Heart right ventricle (tissue), 16 donors: ENCODE measurements at regions of chr18 and their contacts with region 1.

Region 1: DNA sequence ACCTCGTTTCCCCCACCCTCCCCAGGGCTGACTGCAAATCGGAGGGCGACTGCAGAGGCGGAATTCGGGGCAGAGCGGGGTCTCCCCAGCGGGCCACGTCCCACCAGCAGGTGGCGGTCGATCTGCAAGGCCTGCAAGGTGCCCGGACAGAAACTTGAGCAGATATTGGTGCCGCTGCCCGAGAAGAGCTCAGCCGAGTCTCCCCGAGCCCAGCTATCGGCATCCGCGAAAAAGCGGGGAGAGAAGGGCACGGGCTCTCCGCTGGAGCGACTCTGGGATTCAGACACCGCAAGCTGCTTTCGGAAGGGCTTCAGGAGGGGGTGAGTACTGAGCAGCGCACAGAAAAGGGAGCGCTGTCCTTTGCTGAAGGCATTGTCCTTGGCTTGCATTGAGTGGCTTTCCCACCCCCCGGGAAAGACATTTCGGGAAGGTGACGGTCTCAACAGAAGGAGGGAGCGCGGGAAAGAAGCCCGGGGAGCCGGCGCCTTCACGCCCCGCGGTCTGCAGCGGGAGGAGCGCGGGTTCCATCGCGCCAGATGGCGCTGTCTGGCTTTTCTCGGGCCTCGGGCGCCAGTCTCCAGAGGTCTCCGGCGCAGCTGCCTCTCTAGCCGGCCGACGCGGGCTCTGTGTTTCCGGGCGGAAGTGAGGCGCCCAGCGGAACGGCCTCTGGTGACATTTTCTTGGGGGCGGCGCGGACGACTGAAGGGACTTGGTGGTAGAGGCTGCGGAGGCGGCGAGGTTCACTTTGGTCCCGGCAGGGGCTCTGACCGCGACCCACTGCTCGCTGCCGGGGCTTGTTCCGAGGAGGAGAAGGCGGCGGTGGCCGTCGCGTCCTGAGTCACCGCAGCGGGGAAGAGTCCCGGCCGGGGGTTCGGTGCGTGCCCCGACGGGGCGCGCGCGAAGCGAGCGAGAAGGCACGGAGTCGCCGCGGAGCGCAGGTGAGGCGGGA is 69.5 kb downstream of the HAUS1 start:
- DNase-seq: peak; percentile 94
- ATAC-seq: peak; percentile 97 to 99 (median 98)
- H3K4me3 ChIP-seq: peak overlapping the region; percentile 73 to 100 (median 90)
- H3K27ac ChIP-seq: peak overlapping the region; percentile 60 to 97 (median 93)
- H3K4me1 ChIP-seq: peaks cover 3 to 39% (median 32%) of the 10 kb centered on the region in 9 donors
- H3K27me3 ChIP-seq: no peaks in the 10 kb centered on the region
- CTCF ChIP-seq: peak; percentile 67 to 87 (median 74)

Region 2: DNA sequence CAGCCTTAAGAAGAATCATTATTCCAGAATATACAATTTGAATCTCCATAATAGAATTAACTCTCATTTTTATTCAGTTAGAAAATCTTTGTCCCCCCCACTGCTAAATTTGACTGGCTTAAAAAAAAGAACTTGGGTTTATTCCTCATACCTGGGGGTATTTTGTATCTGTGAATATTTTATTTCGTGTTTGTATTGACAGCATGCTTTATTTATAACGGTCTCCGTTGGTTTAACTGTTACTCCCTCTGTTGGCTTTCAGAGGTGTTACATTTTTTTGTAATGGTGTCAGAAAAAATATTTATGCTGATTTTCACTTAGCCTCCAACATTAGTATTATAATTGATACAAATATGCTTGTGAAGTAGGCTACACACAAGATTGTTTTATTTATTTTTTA is 39.6 kb after region 1 on chr18:
- intact Hi-C with region 1: loop called in 8 of 10 experiments (anchors 1 to 5 kb)
- DNase-seq: no peak
- ATAC-seq: peak in 1 of 8 donors; percentile 51
- H3K4me3 ChIP-seq: no peak overlapping the region
- H3K27ac ChIP-seq: no peak overlapping the region
- H3K4me1 ChIP-seq: peaks cover 0 to 72% (median 29%) of the 10 kb centered on the region in 9 donors
- H3K27me3 ChIP-seq: no peaks in the 10 kb centered on the region
- CTCF ChIP-seq: peak; percentile 28 to 67 (median 60)

Region 3: GRCh38 chr18:46281185-46282176 is 107.8 kb after region 1 on chr18:
- intact Hi-C with region 1: loop called in 4 of 10 experiments (anchors 1 to 10 kb)
- DNase-seq: peak; percentile 57 to 64
- ATAC-seq: peak; percentile 70 to 88 (median 84)
- H3K4me3 ChIP-seq: no peak overlapping the region
- H3K27ac ChIP-seq: no peak overlapping the region
- H3K4me1 ChIP-seq: peaks cover 0 to 17% (median 12%) of the 10 kb centered on the region in 9 donors
- H3K27me3 ChIP-seq: no peaks in the 10 kb centered on the region
- CTCF ChIP-seq: peak; percentile 85 to 97 (median 92)

Region 4: GRCh38 chr18:46474487-46475389 is 301.1 kb after region 1 on chr18:
- intact Hi-C with region 1: loop called in 1 of 10 experiments (anchors 5 kb)
- DNase-seq: no peak
- ATAC-seq: peak in 6 of 8 donors; percentile 9 to 49 (median 33)
- H3K4me3 ChIP-seq: no peak overlapping the region
- H3K27ac ChIP-seq: no peak overlapping the region
- H3K4me1 ChIP-seq: peaks cover 0 to 11% (median 0%) of the 10 kb centered on the region in 9 donors
- H3K27me3 ChIP-seq: no peaks in the 10 kb centered on the region
- CTCF ChIP-seq: no peak

Region 5: GRCh38 chr18:46518438-46518837 is 344.8 kb after region 1 on chr18:
- intact Hi-C with region 1: loop called in 1 of 10 experiments (anchors 2 kb)
- DNase-seq: peak; percentile 34 to 45
- ATAC-seq: peak; percentile 77 to 93 (median 86)
- H3K4me3 ChIP-seq: no peak overlapping the region
- H3K27ac ChIP-seq: no peak overlapping the region
- H3K4me1 ChIP-seq: no peaks in the 10 kb centered on the region
- H3K27me3 ChIP-seq: no peaks in the 10 kb centered on the region
- CTCF ChIP-seq: peak; percentile 28 to 63 (median 54)

Region 6: GRCh38 chr18:46917108-46917802 is 743.6 kb after region 1 on chr18 and contains the starts of genes KATNAL2 and PIAS2:
- intact Hi-C with region 1: loop called in 1 of 10 experiments (anchors 10 kb)
- DNase-seq: peak; percentile 66 to 85
- ATAC-seq: peak; percentile 92 to 98 (median 95)
- H3K4me3 ChIP-seq: peak within 1 kb of the TSS; percentile 64 to 94 (median 78)
- H3K27ac ChIP-seq: peak within 1 kb of the TSS; percentile 54 to 94 (median 90)
- H3K4me1 ChIP-seq: peaks cover 2 to 44% (median 26%) of the 10 kb centered on the region in 9 donors
- H3K27me3 ChIP-seq: no peaks in the 10 kb centered on the region
- CTCF ChIP-seq: peak in 2 of 9 donors; percentile 14 to 33
- total RNA-seq, gene KATNAL2: 0.93 to 3.9 (median 2.2) TPM
- total RNA-seq, gene PIAS2: 25.5 to 39.2 (median 34.9) TPM